Common myeloid progenitor, CD34-positive (primary cell): ENCODE measurements at regions of chr10 and their contacts with region 1.

Region 1: DNA sequence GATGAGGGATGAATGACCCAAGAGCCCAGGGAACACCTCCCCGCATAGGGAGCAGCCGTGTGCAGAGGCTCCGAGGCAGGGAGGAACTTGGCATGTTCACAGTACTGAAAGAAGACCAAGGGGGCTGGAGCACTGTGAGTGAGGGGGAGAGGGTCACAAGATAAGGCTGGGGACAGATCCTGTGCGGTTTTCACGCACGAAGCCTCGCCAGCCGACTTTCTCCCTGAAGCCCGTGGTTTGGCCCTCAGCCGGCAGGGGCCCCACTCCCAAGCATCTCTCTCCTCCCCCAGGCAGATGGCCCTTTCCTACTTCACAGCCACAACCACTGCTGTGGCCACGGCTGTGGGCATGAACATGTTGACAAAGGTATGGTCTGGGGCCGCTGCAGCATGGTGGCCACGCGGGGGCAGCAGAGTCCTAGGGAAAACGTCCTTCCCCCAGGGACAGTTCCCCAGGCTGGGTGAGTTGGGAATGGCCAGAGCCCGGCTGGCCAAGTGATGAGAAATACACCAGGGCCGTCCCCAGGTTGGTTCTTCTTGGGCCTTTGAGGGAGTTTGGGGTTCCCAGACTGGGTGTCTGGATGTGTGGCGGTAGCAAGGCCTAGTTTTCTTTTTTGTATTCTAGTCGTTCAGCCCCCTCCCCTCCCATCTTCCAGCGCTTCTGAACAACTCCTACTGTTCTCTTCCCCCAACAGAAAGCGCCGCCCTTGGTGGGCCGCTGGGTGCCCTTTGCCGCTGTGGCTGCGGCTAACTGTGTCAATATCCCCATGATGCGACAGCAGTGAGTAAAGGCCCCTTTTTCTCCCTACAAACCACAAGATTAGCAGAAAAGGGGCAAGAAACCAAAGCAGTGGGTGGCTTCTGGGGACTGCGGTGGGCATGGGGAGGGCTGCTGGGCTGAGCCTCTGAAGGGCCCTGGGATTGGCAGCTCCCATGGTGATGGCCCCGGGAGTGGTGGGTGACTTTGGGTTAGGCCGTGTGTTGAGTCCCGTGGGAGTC is 14.4 kb upstream of the WBP1L start:
- DNase-seq: peak; percentile 77 to 85 (median 84)
- H3K4me3 ChIP-seq: peak overlapping the region in 1 of 7 experiments; percentile 7
- H3K27ac ChIP-seq: no peak overlapping the region
- H3K4me1 ChIP-seq: peaks cover 0 to 17% (median 13%) of the 10 kb centered on the region in 4 experiments
- H3K27me3 ChIP-seq: no peaks in the 10 kb centered on the region

Region 2: DNA sequence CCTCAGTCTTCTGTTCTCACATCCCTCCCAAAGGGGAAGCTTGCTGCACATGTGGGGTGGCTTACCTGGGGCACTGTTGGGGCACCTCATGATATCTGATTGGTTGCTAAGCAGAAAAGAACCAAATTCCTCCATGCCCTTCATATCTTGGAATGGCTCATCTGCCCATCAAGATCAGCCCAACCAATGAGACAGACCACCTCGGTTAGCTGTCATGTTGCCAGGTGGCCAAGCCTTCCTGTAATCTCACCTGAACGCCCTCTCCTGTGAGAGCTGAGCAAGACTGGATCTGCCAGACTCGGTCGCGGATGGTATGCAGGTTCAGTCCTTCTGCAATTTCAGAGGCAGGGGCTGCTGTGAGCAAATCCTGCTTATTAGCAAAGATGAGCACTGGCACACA is 43.8 kb before region 1 on chr10:
- CTCF ChIA-PET with region 1: no interaction called
- POLR2A ChIA-PET with region 1: no interaction called
- DNase-seq: no peak
- H3K4me3 ChIP-seq: no peak overlapping the region
- H3K27ac ChIP-seq: no peak overlapping the region
- H3K4me1 ChIP-seq: peaks cover 0 to 3% (median 0%) of the 10 kb centered on the region in 4 experiments
- H3K27me3 ChIP-seq: no peaks in the 10 kb centered on the region

Region 3: DNA sequence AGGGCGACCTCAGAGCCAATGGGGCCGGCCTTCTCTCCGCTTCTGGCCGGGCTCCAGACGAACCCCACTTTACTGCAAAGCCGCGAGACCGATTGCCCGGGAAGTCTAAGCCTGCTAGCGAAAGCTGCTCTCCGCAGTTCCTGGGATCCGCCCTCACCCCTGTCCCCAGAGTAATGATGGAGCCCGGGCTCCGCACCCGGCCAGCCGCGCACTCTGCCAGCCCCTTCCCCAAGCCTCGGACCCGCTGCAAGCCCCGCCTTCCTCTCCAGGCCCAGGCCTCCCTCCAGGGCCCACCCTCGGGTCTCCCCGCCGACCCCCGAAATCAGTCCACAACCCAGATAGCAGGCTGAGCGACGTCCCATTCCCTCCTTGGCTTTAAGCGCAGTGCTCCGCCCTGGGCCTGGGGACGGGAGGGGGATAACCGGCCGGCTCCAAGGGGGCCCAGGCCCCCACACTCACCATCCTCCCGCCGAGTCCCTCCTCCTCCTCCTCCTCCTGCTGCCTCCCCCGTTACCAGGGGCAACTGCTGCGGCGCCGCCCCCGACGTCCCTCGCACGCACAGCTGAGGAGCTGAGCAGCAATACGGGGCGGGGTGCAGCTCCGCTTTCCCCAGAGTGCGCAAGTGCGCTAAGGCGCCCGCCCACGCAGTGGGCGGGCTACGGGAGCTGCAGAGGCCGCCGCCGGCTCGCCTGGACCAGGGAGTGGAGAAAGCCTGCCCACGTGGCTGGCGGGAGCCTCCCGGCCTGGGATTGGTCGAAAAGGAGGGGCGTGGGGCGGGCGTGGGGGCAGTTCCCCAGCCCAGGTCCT is 15.3 kb before region 1 on chr10 and contains the start of gene ARL3:
- CTCF ChIA-PET with region 1: interaction called, 34 read pairs
- POLR2A ChIA-PET with region 1: no interaction called
- DNase-seq: peak; percentile 97 to 99 (median 99)
- H3K4me3 ChIP-seq: peak within 1 kb of the TSS; percentile 84 to 100 (median 96)
- H3K27ac ChIP-seq: peak within 1 kb of the TSS; percentile 90 to 97
- H3K4me1 ChIP-seq: peaks cover 8 to 55% (median 28%) of the 10 kb centered on the region in 4 experiments
- H3K27me3 ChIP-seq: no peaks in the 10 kb centered on the region

Region 4: DNA sequence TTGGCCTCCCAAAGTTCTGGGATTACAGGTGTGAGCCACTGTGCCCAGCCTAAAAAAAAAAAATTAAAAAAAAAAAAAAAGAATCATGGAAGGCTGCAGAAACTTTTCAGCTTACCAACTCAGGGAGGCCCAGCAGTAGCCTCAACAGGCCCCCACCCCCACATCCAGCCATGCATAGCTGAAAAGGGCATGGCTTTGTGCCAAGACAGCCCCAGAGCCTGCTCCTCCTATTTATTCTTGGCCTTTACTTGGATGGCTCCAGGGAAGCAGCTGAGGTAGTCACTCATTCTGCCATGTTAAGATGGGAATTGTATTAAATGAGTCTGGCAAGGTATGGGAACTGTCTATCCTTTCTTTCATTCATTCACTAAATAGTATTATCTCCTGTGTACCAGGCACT is 175.0 kb after region 1 on chr10:
- CTCF ChIA-PET with region 1: interaction called, 20 read pairs
- POLR2A ChIA-PET with region 1: no interaction called
- DNase-seq: no peak
- H3K4me3 ChIP-seq: no peak overlapping the region
- H3K27ac ChIP-seq: no peak overlapping the region
- H3K4me1 ChIP-seq: peaks cover 0 to 11% (median 3%) of the 10 kb centered on the region in 4 experiments
- H3K27me3 ChIP-seq: no peaks in the 10 kb centered on the region